ENCODE measurements at regions of chr14 and their contacts with region 1.

Region 1: GRCh38 chr14:61694830-61695694 is at the start of gene HIF1A:
- DNase-seq: peak; percentile 96 to 97
- ATAC-seq: peak; percentile 92 to 95
- H3K4me3 ChIP-seq: peak within 1 kb of the TSS; percentile 83 to 98 (median 94)
- H3K27ac ChIP-seq: peak within 1 kb of the TSS; percentile 92 to 98 (median 96)
- H3K4me1 ChIP-seq: peaks cover 19 to 26% of the 10 kb centered on the region in 2 donors
- H3K27me3 ChIP-seq: no peaks in the 10 kb centered on the region
- CTCF ChIP-seq: peak in 1 of 5 experiments; percentile 13
- POLR2A ChIP-seq: peak; percentile 92 to 96
- total RNA-seq, gene HIF1A: 18.2 to 30.7 (median 23.6) TPM

Region 2: GRCh38 chr14:60248697-60249318 is 1446.3 kb before region 1 on chr14 and contains the start of gene PPM1A:
- in situ Hi-C with region 1: no loop called
- intact Hi-C with region 1: loop called (anchors 5 kb)
- DNase-seq: peak; percentile 90 to 96
- ATAC-seq: peak; percentile 77 to 80
- H3K4me3 ChIP-seq: peak within 1 kb of the TSS; percentile 77 to 90 (median 88)
- H3K27ac ChIP-seq: peak within 1 kb of the TSS; percentile 97 to 100 (median 100)
- H3K4me1 ChIP-seq: peaks cover 35 to 38% of the 10 kb centered on the region in 2 donors
- H3K27me3 ChIP-seq: no peaks in the 10 kb centered on the region
- CTCF ChIP-seq: peak in 1 of 5 experiments; percentile 21
- POLR2A ChIP-seq: peak; percentile 83 to 95
- total RNA-seq, gene PPM1A: 81.2 to 107 (median 86.1) TPM

Region 3: GRCh38 chr14:61568572-61569131 is 126.4 kb before region 1 on chr14:
- in situ Hi-C with region 1: no loop called
- intact Hi-C with region 1: loop called (anchors 10 kb)
- DNase-seq: no peak
- ATAC-seq: no peak
- H3K4me3 ChIP-seq: no peak overlapping the region
- H3K27ac ChIP-seq: peak overlapping the region in 1 of 4 donors; percentile 12
- H3K4me1 ChIP-seq: peaks cover 0 to 23% of the 10 kb centered on the region in 2 donors
- H3K27me3 ChIP-seq: no peaks in the 10 kb centered on the region
- CTCF ChIP-seq: no peak
- POLR2A ChIP-seq: no peak

Region 4: DNA sequence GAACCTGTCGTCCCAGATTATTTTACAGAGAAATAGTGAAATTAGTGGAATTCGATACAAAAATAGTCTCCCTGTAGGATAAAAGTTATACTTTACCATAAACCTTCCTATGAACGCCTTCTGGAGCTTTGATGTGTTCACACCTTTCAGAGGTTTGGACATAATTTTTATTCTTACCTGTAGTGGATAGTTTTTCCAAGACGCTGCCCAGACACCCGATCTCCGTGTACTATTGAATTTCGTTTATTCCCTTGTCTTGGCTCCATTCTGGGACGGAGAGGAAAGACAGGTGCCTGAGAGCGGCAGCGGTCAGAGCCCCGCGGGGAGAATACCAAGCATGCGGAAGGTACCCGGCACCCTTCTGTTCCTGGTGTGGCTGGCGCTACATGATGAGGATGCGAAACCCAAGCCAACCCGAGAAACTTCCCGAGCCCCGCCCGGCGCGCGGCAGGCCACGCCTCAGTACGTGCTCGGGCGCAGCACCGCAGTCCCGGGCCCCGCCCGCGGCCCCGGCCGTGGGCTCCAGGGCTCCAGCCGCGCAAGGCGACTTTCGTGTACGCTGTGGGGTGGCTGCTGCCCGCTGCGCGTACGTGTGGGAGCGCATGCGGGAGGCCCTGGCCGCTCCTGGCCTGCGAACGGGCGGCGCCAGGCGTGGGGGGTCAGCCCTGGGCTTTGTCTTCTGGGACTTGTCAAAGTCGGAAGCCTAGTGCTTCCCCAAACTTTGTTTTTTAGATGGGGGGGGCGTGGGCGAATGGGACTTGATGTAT is 55.8 kb after region 1 on chr14:
- in situ Hi-C with region 1: loop called in 1 of 4 experiments (anchors 10 kb)
- intact Hi-C with region 1: loop called (anchors 2 kb)
- DNase-seq: peak; percentile 86 to 90
- ATAC-seq: peak; percentile 92 to 94
- H3K4me3 ChIP-seq: peak overlapping the region; percentile 58 to 73 (median 70)
- H3K27ac ChIP-seq: peak overlapping the region; percentile 78 to 93 (median 91)
- H3K4me1 ChIP-seq: peaks cover 24 to 40% of the 10 kb centered on the region in 2 donors
- H3K27me3 ChIP-seq: no peaks in the 10 kb centered on the region
- CTCF ChIP-seq: no peak
- POLR2A ChIP-seq: peak; percentile 83 to 90

Region 5: GRCh38 chr14:61761959-61762786 is 67.1 kb after region 1 on chr14 and contains the start of gene SNAPC1:
- in situ Hi-C with region 1: loop called in 1 of 4 experiments (anchors 10 kb)
- intact Hi-C with region 1: loop called (anchors 1 kb)
- DNase-seq: peak; percentile 96
- ATAC-seq: peak; percentile 97 to 99
- H3K4me3 ChIP-seq: peak within 1 kb of the TSS; percentile 79 to 87 (median 82)
- H3K27ac ChIP-seq: peak within 1 kb of the TSS; percentile 88 to 95 (median 89)
- H3K4me1 ChIP-seq: peaks cover 38 to 46% of the 10 kb centered on the region in 2 donors
- H3K27me3 ChIP-seq: no peaks in the 10 kb centered on the region
- CTCF ChIP-seq: no peak
- POLR2A ChIP-seq: peak; percentile 87 to 96
- total RNA-seq, gene SNAPC1: 2.0 to 3.7 (median 3.0) TPM

Measured in gastrocnemius medialis (tissue), 4 donors.